ENCODE measurements at regions of chr18 and their contacts with region 1.

Region 1: GRCh38 chr18:9066817-9067306 is 35.6 kb upstream of the NDUFV2 start:
- DNase-seq: peak; percentile 96
- ATAC-seq: peak; percentile 86
- H3K4me3 ChIP-seq: peak overlapping the region; percentile 8; the same call in 1 of the 2 replicates
- H3K27ac ChIP-seq: peak overlapping the region; percentile 96
- H3K4me1 ChIP-seq: peaks cover 66% of the 10 kb centered on the region
- H3K27me3 ChIP-seq: no peaks in the 10 kb centered on the region
- CTCF ChIP-seq: no peak
- EP300 ChIP-seq: peak; percentile 73 to 89
- POLR2A ChIP-seq: peak; percentile 23
- RAD21 ChIP-seq: no peak

Region 2: GRCh38 chr18:8435376-8435775 is 631.5 kb before region 1 on chr18:
- CTCF ChIA-PET with region 1: no interaction called
- POLR2A ChIA-PET with region 1: no interaction called
- RAD21 ChIA-PET with region 1: no interaction called
- SMC1A ChIA-PET with region 1: no interaction called
- in situ Hi-C with region 1: no loop called
- intact Hi-C with region 1: no loop called
- DNase-seq: no peak
- ATAC-seq: no peak
- H3K4me3 ChIP-seq: no peak overlapping the region
- H3K27ac ChIP-seq: no peak overlapping the region
- H3K4me1 ChIP-seq: no peaks in the 10 kb centered on the region
- H3K27me3 ChIP-seq: peaks cover 0 to 2% of the 10 kb centered on the region in 2 experiments; a peak in 1 of 4 replicates
- CTCF ChIP-seq: no peak
- EP300 ChIP-seq: no peak
- POLR2A ChIP-seq: no peak
- RAD21 ChIP-seq: no peak

Region 3: DNA sequence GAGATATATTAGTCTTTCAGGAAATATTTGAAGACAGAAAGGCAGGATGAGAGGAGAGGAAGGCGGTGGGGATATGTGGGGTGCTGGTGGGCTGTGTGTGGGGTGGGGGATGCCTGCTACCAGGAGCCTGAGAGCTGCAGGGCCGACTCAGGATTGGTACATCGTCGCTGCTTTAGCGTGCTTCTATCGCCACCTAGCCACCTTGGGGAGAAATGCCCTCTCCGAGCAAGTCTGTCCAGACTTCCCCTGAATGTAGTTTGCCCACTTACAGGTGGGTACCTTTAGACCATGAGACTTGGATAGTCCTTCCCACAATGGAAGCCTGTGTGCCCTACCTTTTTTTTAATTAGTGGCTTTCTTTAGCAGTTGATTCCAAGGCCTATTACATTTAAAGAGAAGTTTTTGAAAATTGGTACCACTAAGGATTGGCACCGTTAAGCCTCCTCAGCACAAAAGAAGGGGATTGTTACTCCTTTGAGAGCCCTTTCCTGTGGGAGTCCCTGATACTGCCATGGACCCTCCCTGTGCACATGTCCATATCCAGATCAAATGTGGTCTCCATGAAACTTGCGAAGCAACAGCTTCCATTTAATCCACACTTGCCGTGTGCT is 78.5 kb before region 1 on chr18:
- CTCF ChIA-PET with region 1: interaction called, 4 read pairs
- POLR2A ChIA-PET with region 1: no interaction called
- RAD21 ChIA-PET with region 1: interaction called, 3 read pairs
- SMC1A ChIA-PET with region 1: interaction called, 6 read pairs
- in situ Hi-C with region 1: no loop called
- intact Hi-C with region 1: loop called (anchors 2 kb)
- DNase-seq: no peak
- ATAC-seq: peak; percentile 98
- H3K4me3 ChIP-seq: no peak overlapping the region
- H3K27ac ChIP-seq: no peak overlapping the region
- H3K4me1 ChIP-seq: peaks cover 3% of the 10 kb centered on the region
- H3K27me3 ChIP-seq: no peaks in the 10 kb centered on the region
- CTCF ChIP-seq: peak; percentile 89 to 91 (median 91); a peak in 5 of 6 replicates
- EP300 ChIP-seq: no peak
- POLR2A ChIP-seq: no peak
- RAD21 ChIP-seq: peak; percentile 91

Region 4: GRCh38 chr18:9082711-9083510 is 16.0 kb after region 1 on chr18:
- CTCF ChIA-PET with region 1: interaction called, 32 read pairs
- POLR2A ChIA-PET with region 1: interaction called, 10 read pairs
- RAD21 ChIA-PET with region 1: interaction called, 17 read pairs
- SMC1A ChIA-PET with region 1: interaction called, 11 read pairs
- in situ Hi-C with region 1: no loop called
- intact Hi-C with region 1: no loop called
- DNase-seq: peak; percentile 68
- ATAC-seq: peak; percentile 98
- H3K4me3 ChIP-seq: peak overlapping the region; percentile 43
- H3K27ac ChIP-seq: peak overlapping the region; percentile 54
- H3K4me1 ChIP-seq: peaks cover 11% of the 10 kb centered on the region; the same call in 1 of the 2 replicates
- H3K27me3 ChIP-seq: no peaks in the 10 kb centered on the region
- CTCF ChIP-seq: no peak; a peak in 1 of 6 replicates
- EP300 ChIP-seq: peak; percentile 16 to 55; a peak in 2 of 4 replicates
- POLR2A ChIP-seq: no peak
- RAD21 ChIP-seq: peak; percentile 48

Region 5: GRCh38 chr18:9117980-9118841 is 51.3 kb after region 1 on chr18:
- CTCF ChIA-PET with region 1: interaction called, 4 read pairs
- POLR2A ChIA-PET with region 1: interaction called, 6 read pairs
- RAD21 ChIA-PET with region 1: interaction called, 4 read pairs
- SMC1A ChIA-PET with region 1: interaction called, 5 read pairs
- in situ Hi-C with region 1: no loop called
- intact Hi-C with region 1: loop called (anchors 5 kb)
- DNase-seq: no peak
- ATAC-seq: peak; percentile 48
- H3K4me3 ChIP-seq: peak overlapping the region; percentile 25
- H3K27ac ChIP-seq: peak overlapping the region; percentile 89
- H3K4me1 ChIP-seq: peaks cover 38% of the 10 kb centered on the region
- H3K27me3 ChIP-seq: no peaks in the 10 kb centered on the region
- CTCF ChIP-seq: no peak
- EP300 ChIP-seq: peak in 1 of 2 experiments; percentile 54; a peak in 1 of 4 replicates
- POLR2A ChIP-seq: no peak
- RAD21 ChIP-seq: no peak

Region 6: GRCh38 chr18:9147440-9148202 is 80.8 kb after region 1 on chr18:
- CTCF ChIA-PET with region 1: interaction called, 79 read pairs
- POLR2A ChIA-PET with region 1: interaction called, 6 read pairs
- RAD21 ChIA-PET with region 1: interaction called, 12 read pairs
- SMC1A ChIA-PET with region 1: interaction called, 53 read pairs
- in situ Hi-C with region 1: no loop called
- intact Hi-C with region 1: no loop called
- DNase-seq: peak; percentile 53
- ATAC-seq: peak; percentile 72
- H3K4me3 ChIP-seq: peak overlapping the region; percentile 32; the same call in 1 of the 2 replicates
- H3K27ac ChIP-seq: peak overlapping the region; percentile 71
- H3K4me1 ChIP-seq: peaks cover 48% of the 10 kb centered on the region
- H3K27me3 ChIP-seq: no peaks in the 10 kb centered on the region
- CTCF ChIP-seq: peak; percentile 69 to 88 (median 86)
- EP300 ChIP-seq: no peak
- POLR2A ChIP-seq: no peak
- RAD21 ChIP-seq: peak; percentile 94

Region 7: GRCh38 chr18:9353596-9353995 is 286.7 kb after region 1 on chr18:
- CTCF ChIA-PET with region 1: interaction called, 5 read pairs
- POLR2A ChIA-PET with region 1: no interaction called
- RAD21 ChIA-PET with region 1: no interaction called
- SMC1A ChIA-PET with region 1: no interaction called
- in situ Hi-C with region 1: no loop called
- intact Hi-C with region 1: loop called (anchors 5 kb)
- DNase-seq: peak; percentile 88
- ATAC-seq: peak; percentile 92
- H3K4me3 ChIP-seq: no peak overlapping the region
- H3K27ac ChIP-seq: peak overlapping the region; percentile 75
- H3K4me1 ChIP-seq: peaks cover 26% of the 10 kb centered on the region
- H3K27me3 ChIP-seq: no peaks in the 10 kb centered on the region
- CTCF ChIP-seq: no peak
- EP300 ChIP-seq: peak in 1 of 2 experiments; percentile 43; a peak in 1 of 4 replicates
- POLR2A ChIP-seq: no peak
- RAD21 ChIP-seq: no peak

Region 8: GRCh38 chr18:9516437-9517064 is 449.7 kb after region 1 on chr18:
- CTCF ChIA-PET with region 1: interaction called, 11 read pairs
- POLR2A ChIA-PET with region 1: no interaction called
- RAD21 ChIA-PET with region 1: no interaction called
- SMC1A ChIA-PET with region 1: interaction called, 30 read pairs
- in situ Hi-C with region 1: no loop called
- intact Hi-C with region 1: no loop called
- DNase-seq: peak; percentile 17
- ATAC-seq: peak; percentile 74
- H3K4me3 ChIP-seq: no peak overlapping the region
- H3K27ac ChIP-seq: no peak overlapping the region
- H3K4me1 ChIP-seq: no peaks in the 10 kb centered on the region
- H3K27me3 ChIP-seq: no peaks in the 10 kb centered on the region
- CTCF ChIP-seq: peak; percentile 76 to 88 (median 84)
- EP300 ChIP-seq: no peak
- POLR2A ChIP-seq: no peak
- RAD21 ChIP-seq: peak; percentile 95